CD8-positive, alpha-beta T cell (primary cell): ENCODE measurements at regions of chr4 and their contacts with region 1.

Region 1: DNA sequence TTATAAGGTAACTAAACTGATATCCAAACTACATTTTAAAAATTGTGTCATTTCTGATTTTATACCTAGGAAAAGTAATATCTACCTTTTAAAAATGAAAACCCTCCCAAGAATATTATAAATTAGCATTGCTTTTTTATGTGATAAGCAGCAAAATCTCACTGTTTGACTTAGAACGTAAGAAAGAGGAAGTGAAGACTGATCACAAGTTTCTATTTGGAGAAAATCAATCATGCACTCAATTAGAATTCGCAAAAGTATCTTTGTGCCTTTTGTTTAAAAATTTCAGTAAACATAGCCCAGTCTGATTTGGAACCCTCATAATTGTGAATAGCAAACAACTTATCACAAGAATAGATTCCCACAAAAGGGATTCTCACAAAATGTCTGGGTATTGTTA is 142.7 kb downstream of the TENM3 start:
- DNase-seq: no peak
- ATAC-seq: no peak
- H3K4me3 ChIP-seq: no peak overlapping the region
- H3K4me3 Mint-ChIP-seq: no peak overlapping the region
- H3K27ac ChIP-seq: no peak overlapping the region
- H3K27ac Mint-ChIP-seq: no peak overlapping the region
- H3K4me1 ChIP-seq: no peaks in the 10 kb centered on the region
- H3K4me1 Mint-ChIP-seq: no peaks in the 10 kb centered on the region
- H3K27me3 ChIP-seq: no peaks in the 10 kb centered on the region
- H3K27me3 Mint-ChIP-seq: no peaks in the 10 kb centered on the region
- CTCF ChIP-seq: no peak

Region 2: GRCh38 chr4:182427554-182427953 is 41.7 kb after region 1 on chr4:
- CTCF ChIA-PET with region 1: no interaction called
- POLR2A ChIA-PET with region 1: no interaction called
- intact Hi-C with region 1: loop called in 1 of 2 experiments (anchors 1 kb)
- DNase-seq: no peak
- ATAC-seq: no peak
- H3K4me3 ChIP-seq: no peak overlapping the region
- H3K4me3 Mint-ChIP-seq: no peak overlapping the region
- H3K27ac ChIP-seq: no peak overlapping the region
- H3K27ac Mint-ChIP-seq: no peak overlapping the region
- H3K4me1 ChIP-seq: no peaks in the 10 kb centered on the region
- H3K4me1 Mint-ChIP-seq: no peaks in the 10 kb centered on the region
- H3K27me3 ChIP-seq: no peaks in the 10 kb centered on the region
- H3K27me3 Mint-ChIP-seq: peaks cover 2% of the 10 kb centered on the region
- CTCF ChIP-seq: no peak